Activated T-helper 2 cell treated with anti-CD3 and anti-CD28 coated beads, Interferon-gamma antibody, Interleukin-2, Interleukin-4, amounts not matched to agents 10 μg/mL and 5 μg/mL and 100 μg/mL, durations not matched to agents 14 hours and 24 hours and 36 hours (primary cell): ENCODE measurements at regions of chr4 and their contacts with region 1.

Region 1: GRCh38 chr4:79603681-79604080 is 195.7 kb upstream of the GK2 start:
- DNase-seq: no peak
- H3K4me3 Mint-ChIP-seq: no peak overlapping the region
- H3K27ac Mint-ChIP-seq: no peak overlapping the region
- H3K4me1 Mint-ChIP-seq: peaks cover 13% of the 10 kb centered on the region
- H3K27me3 Mint-ChIP-seq: peaks cover 9% of the 10 kb centered on the region

Region 2: GRCh38 chr4:78938868-78939666 is 664.6 kb before region 1 on chr4 and contains the start of gene PAQR3:
- intact Hi-C with region 1: loop called (anchors 10 kb)
- DNase-seq: peak; percentile 77
- H3K4me3 Mint-ChIP-seq: peak within 1 kb of the TSS; percentile 91
- H3K27ac Mint-ChIP-seq: peak within 1 kb of the TSS; percentile 63
- H3K4me1 Mint-ChIP-seq: peaks cover 35% of the 10 kb centered on the region
- H3K27me3 Mint-ChIP-seq: peaks cover 26% of the 10 kb centered on the region
- total RNA-seq, gene PAQR3: 11.0 and 13.1 TPM in 2 replicates

Region 3: GRCh38 chr4:79528241-79528706 is 75.4 kb before region 1 on chr4:
- intact Hi-C with region 1: loop called (anchors 2 kb)
- DNase-seq: no peak
- H3K4me3 Mint-ChIP-seq: no peak overlapping the region
- H3K27ac Mint-ChIP-seq: no peak overlapping the region
- H3K4me1 Mint-ChIP-seq: peaks cover 4% of the 10 kb centered on the region
- H3K27me3 Mint-ChIP-seq: peaks cover 16% of the 10 kb centered on the region

Region 4: GRCh38 chr4:79678472-79679202 is 75.0 kb after region 1 on chr4:
- intact Hi-C with region 1: loop called (anchors 1 kb)
- DNase-seq: no peak
- H3K4me3 Mint-ChIP-seq: no peak overlapping the region
- H3K27ac Mint-ChIP-seq: peak overlapping the region; percentile 14
- H3K4me1 Mint-ChIP-seq: peaks cover 29% of the 10 kb centered on the region
- H3K27me3 Mint-ChIP-seq: peaks cover 6% of the 10 kb centered on the region

Region 5: DNA sequence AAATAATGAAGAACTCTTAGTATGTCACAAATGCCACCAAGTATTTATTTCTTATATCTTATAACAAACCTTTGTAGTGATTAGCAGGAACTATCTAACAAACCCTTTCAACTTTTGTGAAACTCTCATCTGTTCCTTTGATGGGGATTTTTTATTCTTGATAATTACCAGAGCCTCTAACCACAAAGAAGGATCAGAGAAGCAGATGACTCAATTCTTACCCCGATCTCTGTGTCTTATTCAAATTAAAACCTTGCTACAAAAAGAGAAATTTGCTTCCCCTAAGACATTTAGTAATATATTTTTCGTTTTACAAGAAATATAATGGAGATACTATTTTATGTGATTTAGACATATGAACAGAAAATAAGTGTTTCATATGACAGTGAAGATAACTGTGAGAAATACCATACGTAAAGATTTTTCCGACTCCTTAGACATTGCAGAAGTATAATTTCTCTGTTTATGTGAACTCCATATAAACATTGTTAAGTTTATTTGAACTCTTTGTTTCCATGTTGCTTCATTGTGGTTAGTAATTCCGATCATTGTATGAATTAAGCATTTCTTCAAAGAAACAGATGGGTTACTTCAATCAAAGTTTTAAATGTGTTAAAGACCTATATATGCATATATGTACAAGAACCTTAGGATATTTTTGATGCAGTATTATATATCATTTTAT is 937.2 kb after region 1 on chr4:
- intact Hi-C with region 1: loop called (anchors 5 kb)
- DNase-seq: no peak
- H3K4me3 Mint-ChIP-seq: no peak overlapping the region
- H3K27ac Mint-ChIP-seq: no peak overlapping the region
- H3K4me1 Mint-ChIP-seq: peaks cover 11% of the 10 kb centered on the region
- H3K27me3 Mint-ChIP-seq: peaks cover 45% of the 10 kb centered on the region